ENCODE measurements at regions of chr2 and their contacts with region 1.

Region 1: DNA sequence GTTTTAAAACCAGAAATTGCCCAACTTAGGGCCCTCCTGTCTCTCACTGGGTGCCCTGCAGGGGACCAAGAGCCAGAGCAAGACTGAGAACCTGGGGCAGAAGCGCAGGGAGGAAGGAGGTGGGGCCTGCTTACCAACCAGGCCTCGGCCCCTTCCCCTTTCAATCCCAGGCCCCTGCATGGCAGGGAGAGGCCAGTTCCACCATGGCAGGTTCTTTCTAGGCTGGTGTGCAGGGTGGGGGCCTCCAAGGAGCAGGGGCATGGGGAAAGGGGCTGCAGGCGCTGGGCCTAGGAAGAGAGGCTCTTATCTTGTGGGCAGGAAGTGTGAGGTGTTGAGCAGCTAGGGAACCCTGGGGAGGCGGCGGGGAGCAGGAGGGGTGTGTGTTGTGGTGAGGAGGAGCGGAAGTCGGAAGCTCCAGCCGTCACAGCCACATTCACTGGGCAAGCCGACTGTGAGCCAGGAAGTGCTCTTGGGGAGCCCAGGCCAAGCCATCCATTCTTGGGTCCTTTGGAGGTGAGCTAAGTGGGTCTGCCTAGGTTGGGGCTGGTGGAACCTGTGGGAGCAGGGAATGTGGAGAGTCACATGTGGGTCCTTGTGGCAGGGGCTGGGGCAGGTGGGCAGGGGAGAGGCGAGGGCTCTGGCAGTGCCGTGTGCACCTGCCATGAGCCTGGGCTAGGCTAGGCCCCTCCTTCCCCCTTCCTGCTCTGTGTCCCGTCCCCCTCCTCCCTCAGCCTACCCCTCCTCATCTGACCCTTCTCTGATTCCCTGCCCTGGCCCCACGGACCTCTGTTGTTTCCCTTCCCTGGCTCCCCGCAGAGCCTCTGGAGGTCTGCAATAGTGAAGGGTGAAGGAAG is at the start of gene PSD4:
- DNase-seq: peak; percentile 61 to 92 (median 90)
- ATAC-seq: peak; percentile 88
- H3K4me3 ChIP-seq: peak within 1 kb of the TSS; percentile 80
- H3K4me3 Mint-ChIP-seq: peak within 1 kb of the TSS; percentile 87 to 99 (median 94)
- H3K27ac ChIP-seq: peak within 1 kb of the TSS; percentile 92
- H3K27ac Mint-ChIP-seq: peak within 1 kb of the TSS; percentile 89 to 98 (median 93)
- H3K4me1 ChIP-seq: peaks cover 67 to 68% of the 10 kb centered on the region in 2 donors
- H3K4me1 Mint-ChIP-seq: peaks cover 58 to 84% (median 72%) of the 10 kb centered on the region in 7 donors
- H3K27me3 ChIP-seq: no peaks in the 10 kb centered on the region
- H3K27me3 Mint-ChIP-seq: peaks cover 0 to 5% (median 0%) of the 10 kb centered on the region in 5 donors
- total RNA-seq, gene PSD4: 96.4 to 399 (median 167) TPM

Region 2: GRCh38 chr2:112764071-112765044 is 409.4 kb before region 1 on chr2 and contains the start of gene CKAP2L:
- CTCF ChIA-PET with region 1: no interaction called
- POLR2A ChIA-PET with region 1: no interaction called
- intact Hi-C with region 1: loop called in 1 of 2 experiments (anchors 10 kb)
- DNase-seq: peak; percentile 85 to 97 (median 94)
- ATAC-seq: peak; percentile 99
- H3K4me3 ChIP-seq: peak within 1 kb of the TSS; percentile 82
- H3K4me3 Mint-ChIP-seq: peak within 1 kb of the TSS; percentile 90 to 97 (median 92)
- H3K27ac ChIP-seq: peak within 1 kb of the TSS; percentile 65
- H3K27ac Mint-ChIP-seq: peak within 1 kb of the TSS; percentile 29 to 95 (median 71)
- H3K4me1 ChIP-seq: peaks cover 12 to 16% of the 10 kb centered on the region in 2 donors
- H3K4me1 Mint-ChIP-seq: peaks cover 15 to 61% (median 30%) of the 10 kb centered on the region in 7 donors
- H3K27me3 ChIP-seq: no peaks in the 10 kb centered on the region
- H3K27me3 Mint-ChIP-seq: no peaks in the 10 kb centered on the region
- total RNA-seq, gene CKAP2L: 0.69 to 36.2 (median 2.4) TPM in 3 of 5 experiments, not detected in the others

Region 3: GRCh38 chr2:113157118-113157896 is 16.5 kb before region 1 on chr2:
- CTCF ChIA-PET with region 1: interaction called, 29 read pairs
- POLR2A ChIA-PET with region 1: interaction called, 172 read pairs
- intact Hi-C with region 1: loop called (anchors 1 kb)
- DNase-seq: peak in 8 of 9 donors; percentile 39 to 67 (median 53)
- ATAC-seq: peak; percentile 90
- H3K4me3 ChIP-seq: peak overlapping the region; percentile 81
- H3K4me3 Mint-ChIP-seq: peak overlapping the region; percentile 84 to 94 (median 90)
- H3K27ac ChIP-seq: peak overlapping the region; percentile 74
- H3K27ac Mint-ChIP-seq: peak overlapping the region; percentile 77 to 93 (median 88)
- H3K4me1 ChIP-seq: peaks cover 14 to 20% of the 10 kb centered on the region in 2 donors
- H3K4me1 Mint-ChIP-seq: peaks cover 12 to 34% (median 28%) of the 10 kb centered on the region in 7 donors
- H3K27me3 ChIP-seq: no peaks in the 10 kb centered on the region
- H3K27me3 Mint-ChIP-seq: peaks cover 0 to 11% (median 0%) of the 10 kb centered on the region in 5 donors

Region 4: DNA sequence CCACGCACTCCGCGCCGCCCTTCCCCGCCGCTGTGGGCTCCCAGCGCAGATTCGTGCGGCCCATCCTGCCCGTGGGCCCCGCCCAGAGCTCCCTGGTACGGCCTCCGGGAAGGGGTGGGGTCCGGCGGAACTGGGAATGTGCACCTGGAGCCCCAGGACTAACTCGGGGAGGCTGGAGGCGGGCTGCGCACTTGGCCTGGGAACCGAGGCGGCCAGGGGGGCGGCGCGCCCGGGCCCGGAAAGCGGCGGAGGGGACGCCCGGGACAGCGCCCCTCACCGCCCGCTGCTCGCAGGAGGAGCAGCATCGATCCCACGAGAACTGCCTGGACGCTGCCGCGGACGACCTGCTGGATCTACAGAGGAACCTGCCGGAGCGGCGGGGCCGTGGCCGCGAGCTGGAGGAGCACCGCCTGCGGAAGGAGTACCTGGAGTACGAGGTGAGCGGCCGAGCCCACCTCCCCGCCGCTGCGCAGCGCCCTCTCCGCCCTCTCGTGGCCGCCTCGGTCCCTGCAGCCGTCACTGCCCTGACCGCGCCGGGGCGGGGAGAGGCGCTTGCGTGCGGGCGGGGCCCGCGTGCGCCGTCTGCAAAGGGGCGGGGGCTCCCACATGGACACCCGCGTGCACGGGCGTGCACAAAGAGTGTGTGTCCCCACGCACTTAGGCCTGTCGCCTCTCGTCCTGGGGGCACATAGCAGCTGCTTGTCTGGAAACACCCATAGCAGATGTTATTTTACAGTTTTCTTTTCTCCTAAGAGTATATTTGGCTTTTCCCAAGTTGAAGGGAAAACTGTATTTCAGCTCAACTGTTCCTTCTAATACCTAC is 25.2 kb after region 1 on chr2:
- CTCF ChIA-PET with region 1: interaction called, 32 read pairs
- POLR2A ChIA-PET with region 1: interaction called, 32 read pairs
- intact Hi-C with region 1: loop called (anchors 1 kb)
- DNase-seq: peak; percentile 57 to 86 (median 70)
- ATAC-seq: peak; percentile 88
- H3K4me3 ChIP-seq: no peak overlapping the region
- H3K4me3 Mint-ChIP-seq: no peak overlapping the region
- H3K27ac ChIP-seq: peak overlapping the region; percentile 44
- H3K27ac Mint-ChIP-seq: peak overlapping the region in 5 of 9 donors; percentile 36 to 75 (median 62)
- H3K4me1 ChIP-seq: peaks cover under 1 to 7% of the 10 kb centered on the region in 2 donors
- H3K4me1 Mint-ChIP-seq: peaks cover 3 to 54% (median 9%) of the 10 kb centered on the region in 7 donors
- H3K27me3 ChIP-seq: no peaks in the 10 kb centered on the region
- H3K27me3 Mint-ChIP-seq: no peaks in the 10 kb centered on the region

Measured in naive thymus-derived CD4-positive, alpha-beta T cell (primary cell).